Ovary (tissue), 10 donors: ENCODE measurements at regions of chr12 and their contacts with region 1.

Region 1: DNA sequence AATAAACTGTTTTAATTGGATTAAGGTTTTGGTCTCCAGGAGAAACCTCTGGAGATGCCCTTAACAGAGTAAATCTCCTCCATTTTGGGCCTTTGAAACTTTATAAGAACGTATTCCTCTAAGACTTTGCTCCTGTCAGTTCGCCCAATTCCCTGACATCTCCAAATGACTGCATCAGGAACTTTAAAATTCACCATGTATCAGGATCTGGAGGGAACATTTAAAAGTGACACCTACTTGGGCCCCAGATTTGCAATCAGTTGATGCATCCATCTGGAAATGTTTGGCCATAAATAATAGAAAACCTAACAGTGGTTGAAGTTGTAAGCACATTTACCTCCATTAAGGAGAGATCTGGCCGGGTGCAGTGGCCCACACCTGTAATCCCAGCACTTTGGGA is 144.1 kb upstream of the WSCD2 start:
- DNase-seq: no peak
- H3K4me3 ChIP-seq: no peak overlapping the region
- H3K27ac ChIP-seq: no peak overlapping the region
- H3K4me1 ChIP-seq: no peaks in the 10 kb centered on the region
- H3K27me3 ChIP-seq: no peaks in the 10 kb centered on the region
- CTCF ChIP-seq: no peak
- EP300 ChIP-seq: no peak
- POLR2A ChIP-seq: no peak

Region 2: DNA sequence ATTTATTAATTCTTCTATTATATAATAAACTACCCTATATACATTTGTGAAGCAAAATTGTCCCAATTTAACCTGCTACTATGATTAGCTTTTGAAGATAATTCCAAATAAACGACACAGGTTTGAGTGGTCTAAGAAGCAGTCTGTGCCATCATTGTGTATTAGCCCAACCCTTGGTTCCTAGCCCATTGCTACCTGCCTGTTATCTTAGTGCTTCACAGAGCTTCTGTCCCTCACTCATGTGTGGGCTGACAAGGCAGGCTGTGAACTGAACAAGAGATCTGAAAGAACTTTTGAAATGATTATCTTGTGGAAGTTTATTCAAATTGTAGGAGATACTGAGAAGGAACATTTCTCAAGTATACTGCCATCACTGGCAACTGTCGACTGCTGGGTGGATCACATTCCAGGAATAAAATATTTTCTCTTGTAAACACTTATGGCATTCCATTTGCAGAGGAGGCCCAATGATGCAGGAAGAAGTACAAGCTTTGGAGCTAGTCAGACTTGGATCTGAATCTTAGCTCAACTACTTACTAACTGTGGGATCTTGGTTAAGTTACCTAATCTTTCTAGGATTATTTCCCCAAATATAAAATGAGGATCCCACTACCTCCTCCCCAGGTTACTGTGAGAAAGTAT is 990.3 kb before region 1 on chr12:
- intact Hi-C with region 1: no loop called
- DNase-seq: no peak
- H3K4me3 ChIP-seq: no peak overlapping the region
- H3K27ac ChIP-seq: no peak overlapping the region
- H3K4me1 ChIP-seq: no peaks in the 10 kb centered on the region
- H3K27me3 ChIP-seq: no peaks in the 10 kb centered on the region
- CTCF ChIP-seq: no peak
- EP300 ChIP-seq: no peak
- POLR2A ChIP-seq: no peak

Region 3: DNA sequence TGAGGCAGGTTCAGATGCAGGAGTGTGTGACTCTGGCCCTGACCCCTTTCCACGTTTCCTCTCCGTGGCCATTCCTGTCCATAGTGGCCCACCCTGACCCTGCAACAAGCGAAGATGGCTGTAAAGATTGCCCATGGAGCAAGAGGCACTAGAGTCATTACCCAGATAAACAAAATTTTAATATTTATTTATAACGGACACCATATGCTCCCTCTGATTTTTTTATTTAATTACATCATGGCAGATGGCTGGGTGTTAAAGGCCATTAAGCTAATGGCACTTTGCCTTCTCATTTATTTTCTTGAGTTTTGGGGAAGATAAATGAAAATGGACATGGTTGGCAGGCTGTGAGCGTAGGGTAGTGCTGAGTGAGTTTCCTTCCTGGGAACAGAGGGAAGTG is 202.9 kb after region 1 on chr12:
- intact Hi-C with region 1: loop called in 1 of 4 experiments (anchors 5 kb)
- DNase-seq: no peak
- H3K4me3 ChIP-seq: no peak overlapping the region
- H3K27ac ChIP-seq: no peak overlapping the region
- H3K4me1 ChIP-seq: no peaks in the 10 kb centered on the region
- H3K27me3 ChIP-seq: no peaks in the 10 kb centered on the region
- CTCF ChIP-seq: no peak
- EP300 ChIP-seq: no peak
- POLR2A ChIP-seq: no peak

Region 4: GRCh38 chr12:108502922-108503321 is 518.0 kb after region 1 on chr12:
- intact Hi-C with region 1: loop called in 1 of 4 experiments (anchors 5 kb)
- DNase-seq: no peak
- H3K4me3 ChIP-seq: no peak overlapping the region
- H3K27ac ChIP-seq: no peak overlapping the region
- H3K4me1 ChIP-seq: no peaks in the 10 kb centered on the region
- H3K27me3 ChIP-seq: no peaks in the 10 kb centered on the region
- CTCF ChIP-seq: no peak
- EP300 ChIP-seq: no peak
- POLR2A ChIP-seq: no peak